Esophagus muscularis mucosa (tissue), 4 donors: ENCODE measurements at regions of chr1 and their contacts with region 1.

Region 1: GRCh38 chr1:167220537-167221125 is at the start of gene POU2F1:
- DNase-seq: peak; percentile 99
- H3K4me3 ChIP-seq: peak within 1 kb of the TSS; percentile 91 to 98 (median 94)
- H3K27ac ChIP-seq: peak within 1 kb of the TSS; percentile 95 to 98 (median 98)
- H3K4me1 ChIP-seq: peaks cover 10 to 38% (median 36%) of the 10 kb centered on the region in 4 donors
- H3K27me3 ChIP-seq: no peaks in the 10 kb centered on the region
- CTCF ChIP-seq: peak; percentile 75 to 81 (median 81)
- EP300 ChIP-seq: no peak
- POLR2A ChIP-seq: no peak
- total RNA-seq, gene POU2F1: 7.3 to 13.4 (median 10.4) TPM

Region 2: DNA sequence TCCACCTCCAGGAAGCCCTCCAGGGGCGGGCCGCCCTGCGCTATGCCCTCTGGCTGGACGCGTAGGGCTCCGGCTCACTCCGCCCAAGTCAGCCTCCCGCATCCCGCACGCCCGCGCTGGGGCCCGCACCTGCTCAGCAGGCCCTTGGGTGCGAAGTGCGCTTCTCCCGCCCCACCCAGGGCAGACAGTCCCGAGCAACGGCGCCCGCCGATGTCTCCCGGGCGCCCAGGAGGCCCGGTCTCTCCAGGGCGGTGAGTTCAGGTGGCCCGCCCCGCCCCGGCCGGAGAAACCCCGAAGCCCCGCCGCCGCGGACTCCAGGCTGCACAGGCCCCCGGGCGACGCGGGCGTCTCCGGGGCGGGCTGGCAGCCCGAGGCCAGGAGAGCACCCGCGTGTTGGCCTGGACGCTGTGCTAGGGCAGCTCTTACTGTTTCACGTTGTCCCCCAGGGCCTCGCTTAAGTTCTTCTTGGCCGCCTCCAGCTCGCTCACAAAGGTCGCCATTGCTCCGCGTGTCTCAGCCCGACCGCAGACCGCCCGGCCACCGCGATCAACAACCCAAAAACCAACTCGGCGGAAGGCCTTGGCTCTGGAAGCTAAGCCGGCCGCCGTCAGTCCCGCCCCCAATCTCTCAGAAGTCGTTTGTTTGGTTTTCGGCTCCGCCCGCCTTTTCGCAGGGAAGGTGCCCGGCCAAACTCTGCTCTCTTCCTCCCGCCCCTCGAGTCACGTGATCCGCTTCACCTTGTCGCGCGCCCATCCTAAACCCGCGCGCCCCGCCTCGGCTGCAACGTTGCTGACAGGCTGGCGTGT is 344.7 kb before region 1 on chr1 and contains the start of gene TADA1:
- intact Hi-C with region 1: loop called (anchors 2 kb)
- DNase-seq: peak; percentile 100
- H3K4me3 ChIP-seq: peak within 1 kb of the TSS; percentile 86 to 95 (median 90)
- H3K27ac ChIP-seq: peak within 1 kb of the TSS; percentile 92 to 96 (median 94)
- H3K4me1 ChIP-seq: peaks cover 27 to 45% (median 42%) of the 10 kb centered on the region in 4 donors
- H3K27me3 ChIP-seq: no peaks in the 10 kb centered on the region
- CTCF ChIP-seq: peak in 1 of 3 experiments; percentile 42
- EP300 ChIP-seq: no peak
- POLR2A ChIP-seq: peak; percentile 44
- total RNA-seq, gene TADA1: 7.3 to 11.5 (median 8.0) TPM

Region 3: GRCh38 chr1:167066333-167067122 is 154.1 kb before region 1 on chr1:
- intact Hi-C with region 1: loop called (anchors 5 kb)
- DNase-seq: no peak
- H3K4me3 ChIP-seq: peak overlapping the region; percentile 33 to 51 (median 36)
- H3K27ac ChIP-seq: no peak overlapping the region
- H3K4me1 ChIP-seq: peaks cover 6 to 8% (median 7%) of the 10 kb centered on the region in 4 donors
- H3K27me3 ChIP-seq: no peaks in the 10 kb centered on the region
- CTCF ChIP-seq: peak; percentile 89 to 100 (median 92)
- EP300 ChIP-seq: no peak
- POLR2A ChIP-seq: no peak

Region 4: GRCh38 chr1:167553136-167554027 is 332.8 kb after region 1 on chr1 and contains the start of gene CREG1:
- intact Hi-C with region 1: loop called (anchors 10 kb)
- DNase-seq: peak; percentile 96
- H3K4me3 ChIP-seq: peak within 1 kb of the TSS; percentile 81 to 91 (median 89)
- H3K27ac ChIP-seq: peak within 1 kb of the TSS; percentile 85 to 92 (median 88)
- H3K4me1 ChIP-seq: peaks cover 10 to 55% (median 46%) of the 10 kb centered on the region in 4 donors
- H3K27me3 ChIP-seq: no peaks in the 10 kb centered on the region
- CTCF ChIP-seq: peak in 1 of 3 experiments; percentile 14
- EP300 ChIP-seq: no peak
- POLR2A ChIP-seq: peak; percentile 83
- total RNA-seq, gene CREG1: 121 to 203 (median 158) TPM